ENCODE measurements at regions of chr1 and their contacts with region 1.

Region 1: DNA sequence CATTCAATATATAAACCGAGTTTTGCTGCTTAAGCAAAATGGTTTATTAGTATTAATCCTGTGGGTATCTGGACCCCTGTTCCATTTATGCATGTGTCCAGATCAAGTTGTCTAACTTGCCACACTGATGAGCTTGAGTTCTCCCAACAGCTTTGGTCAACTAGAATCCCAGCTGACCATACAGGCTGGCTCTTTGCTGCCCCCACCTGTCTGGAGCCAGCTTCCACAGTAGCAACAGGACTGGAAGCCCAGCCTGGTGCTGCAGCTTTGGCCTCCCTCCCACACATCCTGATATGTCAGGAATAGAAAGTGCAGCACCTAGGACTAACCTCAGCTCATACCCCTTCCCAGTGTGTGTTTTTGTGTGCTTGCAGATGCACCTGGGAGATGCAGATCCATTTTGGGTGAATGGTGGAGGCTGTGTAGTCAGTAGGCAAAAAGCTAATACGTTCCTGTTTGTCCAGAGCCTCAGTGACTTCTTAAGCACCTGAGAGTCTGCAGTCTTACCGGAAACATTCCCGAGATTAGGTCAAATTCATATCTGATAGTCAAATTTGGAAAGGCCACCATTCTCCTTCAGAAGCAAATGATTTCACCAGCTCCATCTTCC is 40.9 kb upstream of the BEND5 start:
- DNase-seq: peak; percentile 73
- H3K4me3 Mint-ChIP-seq: no peak overlapping the region
- H3K27ac Mint-ChIP-seq: no peak overlapping the region
- H3K4me1 Mint-ChIP-seq: no peaks in the 10 kb centered on the region
- H3K27me3 Mint-ChIP-seq: peaks cover 2% of the 10 kb centered on the region

Region 2: GRCh38 chr1:48082271-48082962 is 735.2 kb before region 1 on chr1:
- intact Hi-C with region 1: no loop called
- DNase-seq: no peak
- H3K4me3 Mint-ChIP-seq: no peak overlapping the region
- H3K27ac Mint-ChIP-seq: no peak overlapping the region
- H3K4me1 Mint-ChIP-seq: no peaks in the 10 kb centered on the region
- H3K27me3 Mint-ChIP-seq: peaks cover 16% of the 10 kb centered on the region

Region 3: DNA sequence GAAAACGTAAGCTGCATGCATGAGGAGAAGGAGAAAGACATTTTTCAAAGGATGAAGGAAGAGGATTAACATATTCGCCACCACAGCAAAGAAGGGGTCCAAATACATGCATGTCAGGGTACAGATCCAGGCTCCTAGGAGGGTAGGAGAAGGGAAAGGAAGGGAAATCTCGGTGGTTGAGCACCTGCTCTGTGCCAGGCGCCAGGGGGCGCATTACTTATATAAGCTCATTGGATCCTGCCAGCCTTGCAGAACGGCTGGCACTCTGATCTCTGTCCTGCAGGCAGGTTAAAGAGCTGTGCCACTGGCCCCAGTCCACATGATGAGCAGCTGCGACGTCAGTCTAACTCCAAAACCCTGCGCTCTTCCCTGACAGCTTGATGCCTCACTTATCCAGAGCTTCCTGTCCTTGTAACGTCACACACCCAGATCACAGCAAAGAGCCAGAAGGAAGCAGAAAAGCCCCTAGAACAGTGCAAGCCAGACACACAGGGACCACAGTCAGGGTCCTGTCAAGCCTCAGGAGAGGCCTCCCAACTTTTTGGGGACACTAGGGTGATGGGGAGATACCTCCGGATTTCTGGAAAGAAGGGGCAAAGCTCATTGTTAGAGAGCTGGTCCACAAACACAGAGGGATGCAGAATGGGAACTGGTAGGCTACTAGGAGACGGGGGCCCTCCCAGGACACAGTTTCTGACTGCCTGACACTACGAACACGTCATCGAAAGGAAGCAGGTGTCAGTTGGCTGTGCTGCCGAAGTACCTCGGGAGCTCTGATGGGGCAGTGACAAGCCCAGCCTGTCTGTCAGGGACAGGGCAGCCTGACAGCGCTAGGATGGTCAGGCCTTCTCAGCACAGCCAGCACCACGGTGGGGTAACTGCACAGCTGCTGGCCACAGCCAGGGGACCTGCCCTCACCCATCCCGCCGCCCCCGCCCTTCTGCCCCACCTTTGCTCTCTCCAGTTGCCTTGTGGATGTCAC is 140.0 kb before region 1 on chr1:
- intact Hi-C with region 1: loop called (anchors 2 kb)
- DNase-seq: peak; percentile 76
- H3K4me3 Mint-ChIP-seq: no peak overlapping the region
- H3K27ac Mint-ChIP-seq: no peak overlapping the region
- H3K4me1 Mint-ChIP-seq: peaks cover 2% of the 10 kb centered on the region
- H3K27me3 Mint-ChIP-seq: peaks cover 5% of the 10 kb centered on the region

Region 4: GRCh38 chr1:48761986-48762385 is 55.6 kb before region 1 on chr1:
- intact Hi-C with region 1: no loop called
- DNase-seq: no peak
- H3K4me3 Mint-ChIP-seq: no peak overlapping the region
- H3K27ac Mint-ChIP-seq: no peak overlapping the region
- H3K4me1 Mint-ChIP-seq: peaks cover 15% of the 10 kb centered on the region
- H3K27me3 Mint-ChIP-seq: no peaks in the 10 kb centered on the region

Region 5: GRCh38 chr1:48776393-48777218 is 41.0 kb before region 1 on chr1 and contains the start of gene BEND5:
- intact Hi-C with region 1: loop called (anchors 5 kb)
- DNase-seq: peak; percentile 87
- H3K4me3 Mint-ChIP-seq: peak within 1 kb of the TSS; percentile 85
- H3K27ac Mint-ChIP-seq: peak within 1 kb of the TSS; percentile 80
- H3K4me1 Mint-ChIP-seq: peaks cover 29% of the 10 kb centered on the region
- H3K27me3 Mint-ChIP-seq: peaks cover 1% of the 10 kb centered on the region
- total RNA-seq, gene BEND5: 11.4 and 11.5 TPM in 2 replicates

Measured in activated CD4-positive, alpha-beta T cell treated with anti-CD3 and anti-CD28 coated beads, Interleukin-2, amount 10 ng/mL, durations not matched to agents 24 days and 14 days (primary cell).